Posterior cingulate gyrus (tissue), 11 donors: ENCODE measurements at regions of chr12 and their contacts with region 1.

Region 1: DNA sequence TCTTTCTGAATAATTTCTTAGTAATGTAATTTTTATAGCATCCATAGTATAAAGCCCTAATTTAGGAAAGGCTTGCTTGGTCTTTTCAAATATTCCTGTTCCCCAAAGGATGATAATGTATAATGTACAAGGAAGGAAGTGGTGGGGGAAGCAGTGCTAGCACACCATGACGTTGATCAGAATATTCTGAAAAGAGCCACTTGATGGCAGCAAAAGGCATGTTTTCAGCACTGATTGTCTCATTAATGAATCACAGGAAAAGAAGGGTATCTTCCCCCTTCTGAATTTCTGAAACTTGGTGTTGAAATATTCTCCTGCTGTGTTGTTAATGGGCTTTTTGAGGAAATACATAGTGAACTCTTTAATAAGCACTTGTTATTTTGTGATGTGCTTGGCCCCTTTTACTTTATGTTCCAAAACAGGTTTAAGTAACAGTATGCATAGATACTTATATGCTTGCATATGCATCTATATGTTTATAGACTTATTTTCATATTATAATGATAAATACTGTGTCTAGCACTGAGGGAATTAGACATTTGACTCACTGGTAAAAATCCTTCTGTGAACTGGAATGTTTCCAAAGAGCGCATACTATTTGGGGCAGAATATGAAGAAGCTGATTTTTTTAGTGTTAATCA is 122.0 kb downstream of the TMEM117 start:
- DNase-seq: peak in 2 of 10 donors; percentile 8 to 12

Region 2: GRCh38 chr12:43884683-43885410 is 73.0 kb before region 1 on chr12:
- intact Hi-C with region 1: no loop called
- DNase-seq: peak in 1 of 10 donors; percentile 33

Region 3: DNA sequence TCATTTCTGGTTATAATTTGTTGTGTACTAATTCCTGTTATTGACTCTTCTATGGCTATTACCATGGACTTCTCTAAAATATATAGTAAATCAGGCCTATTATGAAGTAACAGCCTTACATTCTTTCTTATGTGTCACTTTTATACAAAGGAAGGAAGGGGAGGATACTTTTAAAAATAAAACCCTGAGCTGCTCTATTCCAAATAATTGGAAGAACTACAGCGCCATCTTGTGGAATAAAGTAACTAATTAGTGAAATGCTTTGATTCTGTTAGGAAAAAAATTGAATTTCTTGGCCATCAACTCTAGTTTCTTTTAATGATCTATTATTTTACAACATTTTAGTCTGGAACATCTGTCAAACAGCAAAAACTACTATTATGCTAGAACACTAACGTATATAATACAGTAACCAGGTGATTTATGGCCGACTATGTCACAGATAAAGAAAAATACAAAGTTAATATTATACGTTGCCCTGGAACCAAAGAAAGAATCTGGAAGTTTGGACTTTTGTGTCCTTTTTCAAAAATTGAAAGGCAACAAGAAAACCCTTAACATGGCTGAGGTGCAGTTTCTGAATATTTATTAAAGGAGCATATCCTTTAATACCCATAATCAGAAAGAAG is 973.2 kb after region 1 on chr12:
- intact Hi-C with region 1: loop called (anchors 5 kb)
- DNase-seq: no peak

Region 4: DNA sequence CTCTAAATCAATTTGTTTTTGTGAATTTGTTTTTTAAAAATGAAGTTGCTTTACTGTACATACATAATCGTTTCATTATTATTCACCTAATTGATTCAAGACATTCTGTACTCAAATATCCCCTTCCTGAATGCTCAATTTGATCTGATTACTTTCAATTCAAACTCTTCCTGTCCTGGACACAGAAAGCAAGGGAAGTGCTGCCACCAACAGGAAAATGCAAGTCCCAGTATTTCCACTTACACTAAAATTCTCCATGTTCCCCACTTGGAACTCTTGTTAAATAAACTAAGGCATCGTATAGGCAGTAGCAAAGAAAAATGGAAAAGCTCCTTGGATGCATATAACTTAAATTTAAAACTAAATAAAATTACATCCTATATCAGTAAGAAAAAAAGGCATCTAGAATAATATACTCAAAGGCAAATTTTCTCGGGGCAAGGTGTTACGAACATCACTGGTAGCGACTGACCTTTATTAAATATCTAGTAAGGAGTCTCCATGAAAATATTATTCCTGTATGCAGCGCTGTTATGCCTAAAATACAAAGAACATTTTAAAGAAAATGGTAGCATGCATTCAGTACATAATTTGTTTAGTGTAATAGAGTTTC is 1165.0 kb after region 1 on chr12:
- intact Hi-C with region 1: loop called (anchors 5 kb)
- DNase-seq: peak in 2 of 10 donors; percentile 7 to 8